Right lobe of liver (tissue), 6 donors: ENCODE measurements at regions of chr6 and their contacts with region 1.

Region 1: GRCh38 chr6:3124667-3125066 is 6.2 kb downstream of the BPHL start:
- DNase-seq: no peak
- ATAC-seq: no peak
- H3K4me3 ChIP-seq: no peak overlapping the region
- H3K27ac ChIP-seq: no peak overlapping the region
- H3K4me1 ChIP-seq: peaks cover 0 to 53% (median 7%) of the 10 kb centered on the region in 4 donors
- H3K27me3 ChIP-seq: no peaks in the 10 kb centered on the region
- CTCF ChIP-seq: no peak
- POLR2A ChIP-seq: no peak

Region 2: DNA sequence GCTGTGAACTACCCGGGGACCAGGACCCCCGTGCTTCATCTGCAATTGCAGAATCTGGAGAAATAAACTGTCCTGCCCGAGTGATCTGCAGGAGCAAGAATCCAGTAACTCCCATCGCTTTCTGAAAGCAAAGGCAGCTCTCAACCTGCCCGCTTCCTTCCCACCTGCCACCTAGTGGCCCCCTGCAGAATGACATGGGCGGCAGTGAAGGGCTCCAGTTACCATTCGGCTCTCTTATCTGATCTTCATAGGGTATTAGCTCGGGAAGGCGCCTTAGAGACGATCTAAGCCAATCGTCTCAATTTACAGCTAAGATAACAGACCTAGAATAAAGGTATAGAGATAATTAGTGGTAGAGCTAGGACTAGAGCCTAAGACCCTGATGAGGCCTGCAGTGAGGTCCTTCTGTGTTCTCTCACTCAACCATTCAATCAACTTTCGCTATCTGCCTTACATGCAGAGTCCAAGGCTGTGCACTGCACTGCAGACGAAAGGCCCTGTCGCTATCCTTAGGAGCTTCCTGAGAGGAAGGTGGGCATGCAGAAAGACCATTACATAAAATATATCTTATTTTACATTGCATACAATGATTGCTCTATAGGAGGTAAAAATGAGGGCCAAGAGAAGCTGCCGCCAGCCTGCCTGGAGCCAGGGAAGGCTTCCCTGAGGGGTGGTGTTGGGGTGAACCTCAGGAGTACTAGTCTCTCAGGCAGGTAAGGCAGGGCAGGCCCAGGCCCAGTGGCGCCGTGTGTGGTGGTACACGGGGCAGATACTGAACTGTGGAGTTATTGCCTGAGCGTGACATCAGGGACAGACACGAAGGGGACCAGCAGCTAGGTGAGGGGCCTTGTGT is 127.0 kb after region 1 on chr6:
- intact Hi-C with region 1: loop called (anchors 5 to 10 kb)
- DNase-seq: peak; percentile 77 to 84 (median 81)
- ATAC-seq: peak; percentile 94 to 99 (median 96)
- H3K4me3 ChIP-seq: no peak overlapping the region
- H3K27ac ChIP-seq: no peak overlapping the region
- H3K4me1 ChIP-seq: no peaks in the 10 kb centered on the region
- H3K27me3 ChIP-seq: no peaks in the 10 kb centered on the region
- CTCF ChIP-seq: peak; percentile 94 to 98 (median 97)
- POLR2A ChIP-seq: no peak

Region 3: GRCh38 chr6:3258720-3259490 is 134.2 kb after region 1 on chr6 and contains the start of gene PSMG4:
- intact Hi-C with region 1: loop called (anchors 5 to 10 kb)
- DNase-seq: peak; percentile 97 to 98 (median 98)
- ATAC-seq: peak; percentile 96 to 98 (median 98)
- H3K4me3 ChIP-seq: peak within 1 kb of the TSS; percentile 94 to 98 (median 97)
- H3K27ac ChIP-seq: peak within 1 kb of the TSS; percentile 56 to 83 (median 80)
- H3K4me1 ChIP-seq: peaks cover 0 to 20% (median 10%) of the 10 kb centered on the region in 4 donors
- H3K27me3 ChIP-seq: no peaks in the 10 kb centered on the region
- CTCF ChIP-seq: no peak
- POLR2A ChIP-seq: peak; percentile 51
- total RNA-seq, gene PSMG4: 9.4 to 15.4 (median 11.0) TPM

Region 4: DNA sequence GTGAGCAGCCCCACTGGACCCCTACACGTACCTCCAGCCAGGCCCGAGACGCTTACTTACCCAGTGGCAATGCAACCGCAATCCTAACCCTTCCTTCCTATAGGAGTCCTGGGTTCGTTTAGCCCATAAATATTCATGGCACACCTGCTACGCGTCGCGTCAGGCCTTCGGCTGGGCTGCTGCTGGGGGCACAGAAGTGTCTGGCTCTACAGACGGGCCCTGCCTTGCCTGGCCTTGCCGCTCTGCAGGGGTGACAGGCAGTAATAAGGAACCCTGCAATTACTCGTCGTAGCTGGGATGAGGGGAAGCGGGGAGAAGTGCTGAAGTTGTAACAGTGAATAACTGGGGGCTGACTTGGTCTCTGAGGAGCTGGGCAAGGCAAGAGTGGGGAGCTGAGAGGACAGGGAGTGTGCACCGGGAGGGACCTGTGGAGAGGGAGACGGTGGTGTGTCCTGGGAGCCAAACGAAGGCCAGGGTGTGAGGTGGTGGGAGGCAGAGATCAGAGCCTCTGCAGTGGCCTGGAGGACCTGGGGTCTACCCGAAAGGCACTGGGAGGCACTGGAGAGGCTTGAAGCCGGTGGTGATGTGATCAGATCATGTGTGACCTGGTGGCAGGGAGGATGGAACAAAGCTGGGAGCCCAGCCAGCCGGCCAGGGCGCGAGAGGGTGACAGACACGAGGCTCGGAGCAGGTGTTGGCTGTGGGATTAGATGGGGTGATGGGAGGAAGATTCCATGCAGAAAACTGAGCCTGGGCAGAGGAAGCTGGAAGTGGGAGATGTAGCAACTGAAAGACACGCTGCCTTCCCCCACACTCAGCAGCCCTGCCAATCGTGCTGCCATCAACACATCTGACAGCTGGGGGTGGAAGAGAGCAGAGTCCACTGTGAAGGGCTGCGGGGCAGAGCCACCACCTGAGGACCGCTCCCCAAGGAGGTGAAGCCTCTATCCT is 170.5 kb after region 1 on chr6:
- intact Hi-C with region 1: no loop called
- DNase-seq: peak; percentile 53 to 74 (median 61)
- ATAC-seq: peak; percentile 69 to 87 (median 82)
- H3K4me3 ChIP-seq: no peak overlapping the region
- H3K27ac ChIP-seq: peak overlapping the region in 1 of 3 donors; percentile 13
- H3K4me1 ChIP-seq: peaks cover 0 to 12% (median 4%) of the 10 kb centered on the region in 4 donors
- H3K27me3 ChIP-seq: no peaks in the 10 kb centered on the region
- CTCF ChIP-seq: peak in 3 of 4 donors; percentile 23 to 38 (median 33)
- POLR2A ChIP-seq: no peak

Region 5: GRCh38 chr6:3363296-3364025 is 238.8 kb after region 1 on chr6:
- intact Hi-C with region 1: no loop called
- DNase-seq: peak; percentile 69 to 81 (median 77)
- ATAC-seq: peak; percentile 12 to 72 (median 46)
- H3K4me3 ChIP-seq: no peak overlapping the region
- H3K27ac ChIP-seq: peak overlapping the region in 2 of 3 donors; percentile 62 to 91
- H3K4me1 ChIP-seq: peaks cover 0 to 56% (median 28%) of the 10 kb centered on the region in 4 donors
- H3K27me3 ChIP-seq: no peaks in the 10 kb centered on the region
- CTCF ChIP-seq: no peak
- POLR2A ChIP-seq: no peak